ENCODE measurements at regions of chr11 and their contacts with region 1.

Region 1: DNA sequence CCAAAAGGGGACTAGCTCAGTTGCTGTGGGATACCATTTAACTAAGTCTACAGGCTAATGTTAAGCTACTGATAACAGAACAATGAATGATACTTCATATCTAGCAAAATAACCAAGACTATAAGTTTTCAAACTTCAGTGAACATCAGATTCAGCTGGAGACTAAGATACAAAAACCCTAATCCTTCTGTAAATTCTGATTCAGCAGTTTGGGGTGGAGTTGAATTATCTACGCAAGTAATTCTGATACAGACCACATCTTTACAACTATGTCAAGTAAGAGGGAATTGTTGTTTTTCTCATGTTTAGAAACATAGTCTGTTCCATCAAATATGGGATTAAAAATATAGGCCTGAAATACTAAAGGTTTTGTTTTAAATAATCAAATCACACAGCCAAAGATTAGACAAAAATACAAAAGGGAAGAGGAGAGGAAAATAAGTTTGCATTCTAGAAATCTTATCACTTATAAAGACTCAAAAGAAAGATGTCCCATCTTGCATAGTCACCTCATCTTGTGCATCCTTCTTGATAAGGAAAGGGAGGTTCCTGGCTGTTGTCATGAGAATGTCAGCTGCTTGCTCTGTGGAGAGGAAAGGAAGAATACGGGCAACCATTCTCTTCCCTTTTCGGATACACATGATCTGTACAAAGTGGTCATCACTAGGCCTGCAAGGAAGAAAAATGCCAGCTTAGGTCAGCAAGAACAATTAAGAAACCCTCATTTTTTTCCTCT is 21.4 kb downstream of the PATL1 start:
- DNase-seq: no peak
- H3K4me3 ChIP-seq: no peak overlapping the region
- H3K27ac ChIP-seq: no peak overlapping the region
- H3K4me1 ChIP-seq: no peaks in the 10 kb centered on the region
- H3K27me3 ChIP-seq: no peaks in the 10 kb centered on the region
- CTCF ChIP-seq: no peak

Region 2: GRCh38 chr11:59582006-59582405 is 65.4 kb before region 1 on chr11:
- CTCF ChIA-PET with region 1: no interaction called
- POLR2A ChIA-PET with region 1: no interaction called
- intact Hi-C with region 1: loop called (anchors 5 kb)
- DNase-seq: no peak
- H3K4me3 ChIP-seq: no peak overlapping the region
- H3K27ac ChIP-seq: no peak overlapping the region
- H3K4me1 ChIP-seq: no peaks in the 10 kb centered on the region
- H3K27me3 ChIP-seq: no peaks in the 10 kb centered on the region
- CTCF ChIP-seq: no peak

Measured in PC-9 (cell line).